Activated CD8-positive, alpha-beta T cell treated with anti-CD3 and anti-CD28 coated beads, Interleukin-2, amount 10 ng/mL, durations not matched to agents 7 days and 5 days (primary cell): ENCODE measurements at regions of chr5 and their contacts with region 1.

Region 1: DNA sequence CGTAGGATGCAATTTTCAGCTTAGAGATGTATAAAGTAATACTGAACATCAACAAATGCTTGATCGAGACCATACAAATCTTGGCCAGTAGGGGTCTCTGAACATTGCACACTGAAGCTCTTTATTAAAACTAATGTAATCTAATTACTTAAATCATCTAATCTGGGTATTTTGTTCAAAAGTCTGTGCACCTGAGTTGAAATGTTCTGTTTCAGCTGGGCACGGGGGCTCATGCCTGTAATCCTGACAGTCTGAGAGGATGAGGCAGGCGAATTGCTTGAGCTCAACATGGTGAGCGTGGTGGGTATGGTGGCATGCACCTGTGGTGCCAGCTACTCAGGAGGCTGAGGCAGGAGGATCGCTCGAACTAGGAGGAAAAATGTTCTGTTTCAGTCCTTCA is 41.0 kb downstream of the ESM1 start:
- DNase-seq: peak; percentile 65
- ATAC-seq: peak; percentile 67
- H3K4me3 Mint-ChIP-seq: no peak overlapping the region
- H3K27ac Mint-ChIP-seq: no peak overlapping the region
- H3K4me1 Mint-ChIP-seq: peaks cover 18% of the 10 kb centered on the region
- H3K27me3 Mint-ChIP-seq: peaks cover 10% of the 10 kb centered on the region

Region 2: DNA sequence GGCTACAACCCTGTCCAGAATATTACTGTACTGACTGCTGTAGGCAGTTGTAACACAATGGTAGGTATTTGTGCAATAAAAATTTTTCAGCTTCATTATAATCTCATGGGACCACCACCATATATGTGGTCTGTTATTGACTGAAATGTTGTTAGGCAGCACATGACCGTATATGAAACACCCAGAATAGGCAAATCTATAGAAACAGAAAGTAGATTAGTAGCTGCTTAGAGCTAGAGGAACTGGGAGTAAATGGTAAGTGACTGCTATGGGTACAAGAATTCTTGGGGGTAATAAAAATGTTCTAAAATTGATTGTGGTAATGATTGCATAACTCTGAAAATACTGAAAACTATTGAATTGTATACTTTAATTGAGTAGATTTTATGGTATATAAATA is 144.7 kb before region 1 on chr5:
- CTCF ChIA-PET with region 1: no interaction called
- POLR2A ChIA-PET with region 1: no interaction called
- DNase-seq: no peak
- ATAC-seq: no peak
- H3K4me3 Mint-ChIP-seq: no peak overlapping the region
- H3K27ac Mint-ChIP-seq: no peak overlapping the region
- H3K4me1 Mint-ChIP-seq: peaks cover 13% of the 10 kb centered on the region
- H3K27me3 Mint-ChIP-seq: peaks cover 7% of the 10 kb centered on the region

Region 3: GRCh38 chr5:54959673-54960418 is 15.5 kb after region 1 on chr5:
- CTCF ChIA-PET with region 1: interaction called, 98 read pairs
- POLR2A ChIA-PET with region 1: no interaction called
- DNase-seq: peak; percentile 46
- ATAC-seq: no peak
- H3K4me3 Mint-ChIP-seq: no peak overlapping the region
- H3K27ac Mint-ChIP-seq: no peak overlapping the region
- H3K4me1 Mint-ChIP-seq: peaks cover 12% of the 10 kb centered on the region
- H3K27me3 Mint-ChIP-seq: peaks cover 13% of the 10 kb centered on the region

Region 4: GRCh38 chr5:54988817-54989216 is 44.5 kb after region 1 on chr5:
- CTCF ChIA-PET with region 1: interaction called, 21 read pairs
- POLR2A ChIA-PET with region 1: no interaction called
- DNase-seq: no peak
- ATAC-seq: peak; percentile 68
- H3K4me3 Mint-ChIP-seq: no peak overlapping the region
- H3K27ac Mint-ChIP-seq: no peak overlapping the region
- H3K4me1 Mint-ChIP-seq: peaks cover 56% of the 10 kb centered on the region
- H3K27me3 Mint-ChIP-seq: peaks cover 15% of the 10 kb centered on the region

Region 5: GRCh38 chr5:55062039-55062779 is 117.8 kb after region 1 on chr5:
- CTCF ChIA-PET with region 1: interaction called, 34 read pairs
- POLR2A ChIA-PET with region 1: no interaction called
- DNase-seq: peak; percentile 89
- ATAC-seq: peak; percentile 84
- H3K4me3 Mint-ChIP-seq: peak overlapping the region; percentile 64
- H3K27ac Mint-ChIP-seq: peak overlapping the region; percentile 95
- H3K4me1 Mint-ChIP-seq: peaks cover 78% of the 10 kb centered on the region
- H3K27me3 Mint-ChIP-seq: peaks cover 2% of the 10 kb centered on the region

Region 6: GRCh38 chr5:55123365-55123764 is 179.0 kb after region 1 on chr5:
- CTCF ChIA-PET with region 1: interaction called, 15 read pairs
- POLR2A ChIA-PET with region 1: no interaction called
- DNase-seq: no peak
- ATAC-seq: no peak
- H3K4me3 Mint-ChIP-seq: no peak overlapping the region
- H3K27ac Mint-ChIP-seq: no peak overlapping the region
- H3K4me1 Mint-ChIP-seq: peaks cover 3% of the 10 kb centered on the region
- H3K27me3 Mint-ChIP-seq: peaks cover 2% of the 10 kb centered on the region

Region 7: DNA sequence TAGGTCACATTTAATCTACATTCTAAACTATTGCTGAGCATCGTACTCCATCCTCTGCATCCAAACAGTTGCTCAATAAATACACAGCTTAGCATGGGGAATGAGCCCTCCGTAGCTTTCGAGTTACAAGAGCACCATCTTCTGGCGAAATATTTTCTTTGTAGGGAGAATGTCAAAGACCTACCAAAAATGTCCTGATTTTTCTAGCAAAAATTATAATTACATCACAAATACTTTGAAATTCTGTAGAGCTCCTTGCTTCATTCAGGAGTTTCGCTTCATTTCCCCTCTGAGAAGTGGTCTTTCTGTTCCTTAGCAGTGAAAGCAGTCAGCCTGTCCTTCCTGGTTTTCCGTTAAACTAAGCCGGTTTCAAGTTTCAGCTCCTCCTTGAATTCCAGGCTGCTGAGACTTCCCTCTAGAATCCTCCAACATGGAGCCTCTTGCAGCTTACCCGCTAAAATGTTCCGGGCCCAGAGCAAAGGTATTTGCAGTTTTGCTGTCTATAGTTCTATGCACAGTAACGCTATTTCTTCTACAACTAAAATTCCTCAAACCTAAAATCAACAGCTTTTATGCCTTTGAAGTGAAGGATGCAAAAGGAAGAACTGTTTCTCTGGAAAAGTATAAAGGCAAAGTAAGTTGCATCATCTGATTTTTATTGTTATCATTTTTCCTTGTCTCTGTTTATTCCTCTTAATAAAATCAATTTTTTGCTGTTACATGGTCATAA is 215.6 kb after region 1 on chr5 and contains the start of gene GPX8:
- CTCF ChIA-PET with region 1: interaction called, 33 read pairs
- POLR2A ChIA-PET with region 1: no interaction called
- DNase-seq: peak; percentile 61
- ATAC-seq: peak; percentile 70
- H3K4me3 Mint-ChIP-seq: no peak within 1 kb of the TSS
- H3K27ac Mint-ChIP-seq: no peak within 1 kb of the TSS
- H3K4me1 Mint-ChIP-seq: peaks cover 4% of the 10 kb centered on the region
- H3K27me3 Mint-ChIP-seq: peaks cover 47% of the 10 kb centered on the region
- total RNA-seq, gene GPX8: not detected